Lower leg skin (tissue), 4 donors: ENCODE measurements at regions of chr10 and their contacts with region 1.

Region 1: DNA sequence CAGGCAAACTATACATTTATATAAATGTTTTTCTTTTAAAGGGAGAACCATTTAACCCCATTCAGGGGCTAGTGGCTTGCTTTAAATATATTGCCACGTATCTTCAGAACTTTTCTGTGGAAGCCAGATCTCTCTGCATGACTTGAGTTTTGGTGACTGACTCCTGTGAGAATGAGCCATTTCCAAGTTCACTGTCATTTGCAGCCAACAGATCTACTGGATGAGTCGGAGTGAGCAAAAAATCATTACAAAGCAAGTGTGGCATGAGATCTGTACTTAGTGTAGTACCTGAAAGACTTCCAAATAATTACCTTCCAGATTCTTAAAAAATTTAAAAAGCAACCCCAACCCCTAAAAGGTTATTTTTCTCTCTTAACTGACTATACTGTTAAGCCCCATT is 45.6 kb downstream of the PDSS1 start:
- DNase-seq: no peak
- H3K4me3 ChIP-seq: no peak overlapping the region
- CTCF ChIP-seq: no peak
- POLR2A ChIP-seq: no peak

Region 2: DNA sequence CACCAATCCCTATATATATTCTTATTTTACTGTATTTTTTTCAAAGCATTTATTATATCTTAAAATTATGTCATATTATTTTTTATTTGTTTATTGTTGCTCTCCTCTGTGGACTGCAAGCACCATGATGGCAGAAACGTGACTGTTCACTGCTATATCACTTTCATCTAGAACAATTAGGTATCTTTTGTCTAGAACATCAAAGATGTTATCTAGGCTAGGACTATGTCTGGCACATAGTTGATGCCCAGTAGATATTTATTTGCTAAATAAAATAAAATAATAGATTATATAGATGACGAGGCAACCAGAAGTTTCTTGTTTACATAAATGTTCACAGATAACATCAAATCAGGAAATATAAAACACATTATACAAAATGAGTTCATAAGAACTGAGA is 1580.7 kb before region 1 on chr10:
- intact Hi-C with region 1: loop called (anchors 5 kb)
- DNase-seq: no peak
- H3K4me3 ChIP-seq: no peak overlapping the region
- CTCF ChIP-seq: no peak
- POLR2A ChIP-seq: no peak

Region 3: GRCh38 chr10:27035163-27035562 is 292.1 kb after region 1 on chr10:
- intact Hi-C with region 1: no loop called
- DNase-seq: no peak
- H3K4me3 ChIP-seq: no peak overlapping the region
- CTCF ChIP-seq: no peak
- POLR2A ChIP-seq: no peak

Region 4: GRCh38 chr10:27457966-27458365 is 714.9 kb after region 1 on chr10:
- intact Hi-C with region 1: no loop called
- DNase-seq: no peak
- H3K4me3 ChIP-seq: no peak overlapping the region
- CTCF ChIP-seq: no peak
- POLR2A ChIP-seq: no peak